Naive thymus-derived CD4-positive, alpha-beta T cell (primary cell): ENCODE measurements at regions of chr4 and their contacts with region 1.

Region 1: DNA sequence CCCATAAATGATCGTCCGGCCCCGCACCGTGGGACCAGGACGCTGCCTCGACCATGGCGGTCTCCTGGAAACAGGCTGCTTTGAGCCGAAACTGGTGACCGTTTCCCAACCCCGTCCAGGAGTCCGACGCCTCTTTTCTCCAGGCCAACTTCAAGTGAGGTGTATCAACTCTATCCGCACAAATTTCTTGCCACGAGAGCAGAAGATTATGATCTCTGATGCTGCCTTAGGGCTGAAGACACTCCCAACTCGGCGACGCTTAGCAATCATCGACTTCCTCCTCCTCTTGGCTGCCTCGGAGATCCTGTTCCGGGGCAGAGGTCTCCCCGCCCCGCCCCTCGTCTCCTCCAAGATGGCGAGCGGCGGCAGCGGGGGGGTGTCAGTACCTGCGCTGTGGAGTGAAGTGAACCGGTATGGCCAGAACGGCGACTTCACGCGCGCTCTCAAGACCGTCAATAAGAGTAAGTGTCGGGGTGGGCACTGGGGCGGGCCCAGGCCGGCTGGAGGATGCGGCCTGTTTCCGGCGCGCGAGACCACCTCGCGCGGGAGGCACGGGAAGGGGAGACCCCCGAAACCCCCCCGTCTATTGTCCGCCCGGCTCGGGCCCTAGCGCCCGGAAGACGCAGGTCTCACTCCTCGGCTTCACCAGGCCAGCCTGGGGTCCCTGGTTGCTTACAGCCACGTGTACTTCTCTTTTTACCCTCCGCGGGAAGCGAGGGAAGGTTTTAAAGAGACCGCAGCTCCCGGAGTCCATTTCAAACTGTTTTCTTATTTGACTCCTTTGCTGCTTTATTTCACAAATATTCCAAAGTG is at the start of gene SRP72:
- DNase-seq: peak; percentile 80 to 95 (median 88)
- ATAC-seq: peak; percentile 98
- H3K4me3 ChIP-seq: peak within 1 kb of the TSS; percentile 98
- H3K4me3 Mint-ChIP-seq: peak within 1 kb of the TSS; percentile 93 to 100 (median 96)
- H3K27ac ChIP-seq: peak within 1 kb of the TSS; percentile 90
- H3K27ac Mint-ChIP-seq: peak within 1 kb of the TSS; percentile 94 to 99 (median 96)
- H3K4me1 ChIP-seq: peaks cover 25 to 29% of the 10 kb centered on the region in 2 donors
- H3K4me1 Mint-ChIP-seq: peaks cover 46 to 68% (median 62%) of the 10 kb centered on the region in 7 donors
- H3K27me3 ChIP-seq: no peaks in the 10 kb centered on the region
- H3K27me3 Mint-ChIP-seq: no peaks in the 10 kb centered on the region
- total RNA-seq, gene SRP72: 98.4 to 145 (median 109) TPM

Region 2: GRCh38 chr4:55853484-55854046 is 613.9 kb before region 1 on chr4 and contains the start of gene EXOC1:
- CTCF ChIA-PET with region 1: no interaction called
- POLR2A ChIA-PET with region 1: no interaction called
- intact Hi-C with region 1: loop called (anchors 2 to 10 kb)
- DNase-seq: peak; percentile 93 to 98 (median 94)
- ATAC-seq: peak; percentile 99
- H3K4me3 ChIP-seq: peak within 1 kb of the TSS; percentile 84
- H3K4me3 Mint-ChIP-seq: peak within 1 kb of the TSS in 2 of 10 donors; percentile 34 to 69
- H3K27ac ChIP-seq: peak within 1 kb of the TSS; percentile 87
- H3K27ac Mint-ChIP-seq: peak within 1 kb of the TSS in 7 of 9 donors; percentile 75 to 94 (median 90)
- H3K4me1 ChIP-seq: peaks cover 26 to 31% of the 10 kb centered on the region in 2 donors
- H3K4me1 Mint-ChIP-seq: peaks cover 22 to 48% (median 42%) of the 10 kb centered on the region in 7 donors
- H3K27me3 ChIP-seq: no peaks in the 10 kb centered on the region
- H3K27me3 Mint-ChIP-seq: no peaks in the 10 kb centered on the region
- total RNA-seq, gene EXOC1: 20.3 to 46.7 (median 32.1) TPM

Region 3: GRCh38 chr4:56480691-56481090 is 13.2 kb after region 1 on chr4:
- CTCF ChIA-PET with region 1: no interaction called
- POLR2A ChIA-PET with region 1: no interaction called
- intact Hi-C with region 1: loop called in 1 of 2 experiments (anchors 2 kb)
- DNase-seq: no peak
- ATAC-seq: no peak
- H3K4me3 ChIP-seq: no peak overlapping the region
- H3K4me3 Mint-ChIP-seq: no peak overlapping the region
- H3K27ac ChIP-seq: no peak overlapping the region
- H3K27ac Mint-ChIP-seq: no peak overlapping the region
- H3K4me1 ChIP-seq: no peaks in the 10 kb centered on the region
- H3K4me1 Mint-ChIP-seq: peaks cover 0 to 6% (median 0%) of the 10 kb centered on the region in 7 donors
- H3K27me3 ChIP-seq: no peaks in the 10 kb centered on the region
- H3K27me3 Mint-ChIP-seq: no peaks in the 10 kb centered on the region

Region 4: GRCh38 chr4:56530269-56531148 is 63.0 kb after region 1 on chr4:
- CTCF ChIA-PET with region 1: no interaction called
- POLR2A ChIA-PET with region 1: no interaction called
- intact Hi-C with region 1: loop called (anchors 1 kb)
- DNase-seq: peak; percentile 53 to 75 (median 59)
- ATAC-seq: peak; percentile 99
- H3K4me3 ChIP-seq: peak overlapping the region; percentile 91
- H3K4me3 Mint-ChIP-seq: peak overlapping the region in 1 of 10 donors; percentile 70
- H3K27ac ChIP-seq: peak overlapping the region; percentile 44
- H3K27ac Mint-ChIP-seq: peak overlapping the region in 3 of 9 donors; percentile 26 to 55 (median 38)
- H3K4me1 ChIP-seq: peaks cover 0 to 4% of the 10 kb centered on the region in 2 donors
- H3K4me1 Mint-ChIP-seq: peaks cover 0 to 2% (median 0%) of the 10 kb centered on the region in 7 donors
- H3K27me3 ChIP-seq: peaks cover 0 to 4% of the 10 kb centered on the region in 2 donors
- H3K27me3 Mint-ChIP-seq: peaks cover 0 to 22% (median 7%) of the 10 kb centered on the region in 5 donors

Region 5: DNA sequence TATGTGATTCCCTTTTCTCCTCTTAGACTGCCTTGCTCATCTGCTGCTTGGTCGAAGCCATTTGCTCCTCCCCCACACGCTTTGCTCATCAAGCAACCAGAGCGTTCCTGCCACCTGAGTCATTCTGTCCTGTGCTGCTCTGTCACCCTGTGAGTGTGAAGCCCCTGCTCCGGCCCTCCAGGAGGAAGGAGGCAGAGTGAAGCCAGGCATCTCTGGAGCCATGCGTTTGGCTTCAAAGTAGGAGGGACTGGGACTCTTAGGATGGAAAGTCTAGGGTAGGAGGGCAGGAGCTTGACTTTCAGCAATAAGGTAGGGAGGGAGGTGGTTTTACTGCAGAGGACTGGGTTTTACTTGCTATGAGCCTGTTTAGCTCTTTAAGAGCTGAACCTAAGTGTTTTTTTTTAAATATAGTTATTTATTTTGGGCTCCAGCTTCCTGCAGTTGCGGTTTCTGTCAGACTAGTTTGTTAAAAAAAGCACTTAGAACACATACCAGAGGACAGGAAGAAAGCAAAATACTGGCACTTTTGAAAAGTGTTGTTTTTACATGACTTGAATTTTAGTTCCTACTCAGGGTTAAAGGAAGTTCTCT is 290.4 kb after region 1 on chr4:
- CTCF ChIA-PET with region 1: interaction called, 3 read pairs
- POLR2A ChIA-PET with region 1: no interaction called
- intact Hi-C with region 1: loop called in 1 of 2 experiments (anchors 2 kb)
- DNase-seq: peak; percentile 12 to 85 (median 68)
- ATAC-seq: peak; percentile 88
- H3K4me3 ChIP-seq: peak overlapping the region; percentile 46
- H3K4me3 Mint-ChIP-seq: peak overlapping the region; percentile 71 to 91 (median 85)
- H3K27ac ChIP-seq: peak overlapping the region; percentile 65
- H3K27ac Mint-ChIP-seq: peak overlapping the region; percentile 76 to 99 (median 92)
- H3K4me1 ChIP-seq: peaks cover 28 to 29% of the 10 kb centered on the region in 2 donors
- H3K4me1 Mint-ChIP-seq: peaks cover 39 to 76% (median 57%) of the 10 kb centered on the region in 7 donors
- H3K27me3 ChIP-seq: no peaks in the 10 kb centered on the region
- H3K27me3 Mint-ChIP-seq: peaks cover 0 to 14% (median 0%) of the 10 kb centered on the region in 5 donors